Astrocyte of the cerebellum (primary cell): ENCODE measurements at regions of chr20 and their contacts with region 1.

Region 1: GRCh38 chr20:47317127-47317895 is 39.2 kb downstream of the ZMYND8 start:
- DNase-seq: peak; percentile 75
- H3K4me3 ChIP-seq: no peak overlapping the region
- CTCF ChIP-seq: no peak

Region 2: DNA sequence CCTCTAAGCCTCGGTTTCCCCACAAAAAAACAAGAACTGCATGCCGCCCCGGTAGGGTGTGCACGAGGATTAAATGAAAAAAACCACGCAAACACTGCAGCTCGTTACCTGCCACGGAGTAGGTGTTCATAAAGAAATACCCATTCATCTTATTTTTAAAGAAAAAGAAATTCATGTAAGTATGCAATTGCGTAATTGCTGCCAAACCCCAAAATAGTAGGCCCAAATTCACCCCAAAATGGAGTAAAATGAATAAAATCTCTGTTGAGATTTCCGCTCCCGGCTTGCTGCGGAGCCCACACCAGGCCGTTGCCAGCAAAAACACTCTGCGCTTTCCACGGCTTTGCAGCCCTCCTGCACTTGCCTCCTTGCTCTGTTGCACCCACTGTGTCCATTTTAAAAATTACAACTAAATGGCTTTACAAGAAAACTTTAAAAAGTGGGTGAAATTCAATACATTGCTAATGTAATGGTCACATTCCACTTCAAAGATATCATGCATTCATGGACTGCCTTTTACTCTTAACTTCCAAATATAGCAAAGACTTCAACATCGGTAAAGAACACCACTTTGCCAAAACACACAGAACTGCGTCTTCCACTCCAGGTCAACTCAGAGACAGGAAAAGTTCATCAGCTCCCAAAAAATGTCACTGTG is 85.8 kb before region 1 on chr20:
- in situ Hi-C with region 1: no loop called
- DNase-seq: peak; percentile 35
- H3K4me3 ChIP-seq: no peak overlapping the region
- CTCF ChIP-seq: peak; percentile 24

Region 3: DNA sequence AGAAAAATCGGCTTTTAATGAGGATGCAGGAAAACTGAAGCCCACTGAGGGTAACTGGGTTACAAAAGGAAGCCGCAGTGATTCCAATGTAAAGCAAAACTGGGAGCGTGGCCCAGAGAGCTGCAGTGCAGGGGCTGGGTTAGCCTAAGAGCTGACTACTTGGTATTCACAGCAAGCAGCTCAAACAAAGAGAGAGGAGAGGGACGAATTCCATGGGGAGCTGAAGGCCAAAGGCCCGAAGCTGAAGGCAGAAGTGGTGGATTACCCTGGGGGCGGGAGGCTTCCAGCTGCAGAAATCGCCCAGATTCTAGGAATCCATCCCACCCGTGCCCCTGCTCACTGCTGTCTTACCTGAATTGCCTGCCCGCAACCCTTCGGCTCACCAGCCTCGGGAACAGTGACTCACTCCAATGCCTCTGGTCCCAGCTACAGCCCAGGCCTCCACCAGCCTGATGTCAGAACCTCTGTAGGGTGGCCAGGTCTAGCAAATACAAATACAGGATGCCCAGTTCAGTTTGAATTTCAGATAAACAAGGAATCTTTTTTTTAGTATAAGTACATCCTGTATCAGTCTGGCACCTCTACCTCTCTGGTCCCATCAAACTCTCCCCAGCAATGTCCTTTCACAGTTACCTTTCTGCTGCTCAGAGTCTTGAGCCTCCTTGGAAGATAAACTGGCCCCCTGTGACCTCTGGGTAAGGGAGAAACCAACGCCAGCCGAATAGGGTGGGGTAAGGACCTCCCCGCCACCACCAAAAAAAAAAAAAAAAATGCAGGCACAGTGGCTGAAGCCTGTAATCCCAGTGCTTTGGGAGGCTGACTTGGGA is 53.8 kb after region 1 on chr20:
- in situ Hi-C with region 1: loop called (anchors 5 kb)
- DNase-seq: no peak
- H3K4me3 ChIP-seq: no peak overlapping the region
- CTCF ChIP-seq: no peak